PC-9 (cell line): ENCODE measurements at regions of chr9 and their contacts with region 1.

Region 1: GRCh38 chr9:94783102-94783664 is 56.7 kb downstream of the AOPEP start:
- DNase-seq: peak; percentile 98 to 99
- H3K4me3 ChIP-seq: no peak overlapping the region
- H3K27ac ChIP-seq: peak overlapping the region; percentile 78
- H3K4me1 ChIP-seq: peaks cover 30% of the 10 kb centered on the region
- H3K27me3 ChIP-seq: no peaks in the 10 kb centered on the region
- CTCF ChIP-seq: peak; percentile 84

Region 2: GRCh38 chr9:94586814-94587213 is 196.4 kb before region 1 on chr9:
- CTCF ChIA-PET with region 1: no interaction called
- POLR2A ChIA-PET with region 1: interaction called, 10 read pairs
- intact Hi-C with region 1: no loop called
- DNase-seq: peak in 1 of 2 experiments; percentile 8
- H3K4me3 ChIP-seq: no peak overlapping the region
- H3K27ac ChIP-seq: no peak overlapping the region
- H3K4me1 ChIP-seq: no peaks in the 10 kb centered on the region
- H3K27me3 ChIP-seq: no peaks in the 10 kb centered on the region
- CTCF ChIP-seq: no peak

Region 3: GRCh38 chr9:94757158-94757557 is 26.0 kb before region 1 on chr9:
- CTCF ChIA-PET with region 1: no interaction called
- POLR2A ChIA-PET with region 1: interaction called, 17 read pairs
- intact Hi-C with region 1: no loop called
- DNase-seq: no peak
- H3K4me3 ChIP-seq: no peak overlapping the region
- H3K27ac ChIP-seq: no peak overlapping the region
- H3K4me1 ChIP-seq: no peaks in the 10 kb centered on the region
- H3K27me3 ChIP-seq: no peaks in the 10 kb centered on the region
- CTCF ChIP-seq: no peak

Region 4: DNA sequence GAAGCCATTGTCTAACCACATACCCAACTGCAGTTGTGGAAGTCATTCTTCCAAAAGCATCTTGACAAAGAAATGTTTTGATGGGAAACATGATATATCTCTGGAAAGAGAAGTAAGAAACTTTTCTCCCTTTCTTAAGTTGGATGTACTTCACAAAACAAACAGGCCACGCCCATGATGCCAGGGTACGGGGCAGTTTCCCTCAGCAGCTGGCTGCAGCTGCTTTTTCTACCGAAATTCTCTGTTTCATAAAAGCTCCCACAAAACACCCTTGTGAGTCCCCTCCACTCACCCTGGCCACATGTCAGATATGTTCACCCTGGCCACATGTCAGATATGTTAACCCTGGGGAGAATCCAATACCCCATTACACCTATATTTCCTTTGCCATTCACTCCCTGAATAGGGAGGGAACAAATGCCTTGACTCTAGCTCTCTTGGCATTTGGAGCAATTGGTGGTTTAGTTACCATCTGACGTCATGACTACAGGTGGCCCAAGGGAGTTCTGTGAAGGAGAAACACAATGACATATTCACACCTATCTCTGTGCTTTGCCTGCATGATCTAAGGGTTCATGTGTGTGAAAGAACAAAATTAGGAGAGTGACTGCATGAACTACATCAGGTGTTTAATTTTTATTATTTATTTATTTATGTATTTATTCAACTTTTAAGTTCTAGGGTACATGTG is 46.3 kb after region 1 on chr9:
- CTCF ChIA-PET with region 1: no interaction called
- POLR2A ChIA-PET with region 1: no interaction called
- intact Hi-C with region 1: no loop called
- DNase-seq: no peak
- H3K4me3 ChIP-seq: no peak overlapping the region
- H3K27ac ChIP-seq: no peak overlapping the region
- H3K4me1 ChIP-seq: peaks cover 19% of the 10 kb centered on the region
- H3K27me3 ChIP-seq: no peaks in the 10 kb centered on the region
- CTCF ChIP-seq: no peak

Region 5: GRCh38 chr9:94922098-94922607 is 139.0 kb after region 1 on chr9:
- CTCF ChIA-PET with region 1: interaction called, 5 read pairs
- POLR2A ChIA-PET with region 1: interaction called, 4 read pairs
- intact Hi-C with region 1: loop called (anchors 1 kb)
- DNase-seq: peak; percentile 79 to 99
- H3K4me3 ChIP-seq: peak overlapping the region; percentile 46
- H3K27ac ChIP-seq: peak overlapping the region; percentile 97
- H3K4me1 ChIP-seq: peaks cover 92% of the 10 kb centered on the region
- H3K27me3 ChIP-seq: no peaks in the 10 kb centered on the region
- CTCF ChIP-seq: no peak

Region 6: DNA sequence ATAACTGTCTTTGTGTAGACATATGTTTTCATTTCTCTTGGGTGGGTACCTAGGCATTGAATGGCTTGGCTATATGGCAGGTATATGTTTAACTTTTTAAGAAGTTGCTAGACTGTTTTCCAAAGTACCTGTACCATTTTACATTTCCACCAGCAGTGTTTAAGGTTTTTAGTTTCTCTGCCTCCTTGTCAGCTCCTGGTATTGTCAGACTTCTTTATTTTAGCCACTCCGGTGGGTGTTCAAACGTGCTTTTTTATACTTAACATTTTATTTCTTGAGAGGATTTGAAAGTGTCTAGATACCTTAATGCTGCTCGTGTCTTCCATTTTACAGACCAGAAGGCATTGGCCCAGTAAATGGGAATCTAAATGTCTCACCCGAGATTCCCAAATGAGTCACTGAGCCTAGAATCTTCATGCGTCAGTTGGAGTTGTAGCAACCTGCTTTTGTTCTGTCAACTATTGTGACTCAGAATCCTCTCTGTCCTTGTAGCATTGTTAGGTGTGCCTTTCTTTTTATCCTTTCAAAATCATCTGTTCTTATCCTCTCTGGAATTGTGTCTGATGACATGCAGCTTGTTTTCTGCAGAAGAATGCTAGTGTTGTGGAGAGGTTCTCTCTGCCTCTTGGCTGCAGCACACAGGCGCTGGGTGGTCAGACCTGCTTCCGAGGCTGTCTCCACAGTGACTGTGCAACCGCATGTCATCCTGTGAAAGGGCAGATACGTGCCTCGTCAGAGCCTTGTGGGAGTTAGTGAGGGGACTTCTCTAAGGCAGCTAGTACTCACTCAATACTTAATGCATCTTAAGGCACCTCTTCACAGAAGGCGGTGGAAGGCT is 235.1 kb after region 1 on chr9:
- CTCF ChIA-PET with region 1: no interaction called
- POLR2A ChIA-PET with region 1: no interaction called
- intact Hi-C with region 1: loop called (anchors 1 kb)
- DNase-seq: peak in 1 of 2 experiments; percentile 77
- H3K4me3 ChIP-seq: no peak overlapping the region
- H3K27ac ChIP-seq: peak overlapping the region; percentile 38
- H3K4me1 ChIP-seq: peaks cover 12% of the 10 kb centered on the region; the same call in 1 of the 2 replicates
- H3K27me3 ChIP-seq: no peaks in the 10 kb centered on the region
- CTCF ChIP-seq: no peak

Region 7: DNA sequence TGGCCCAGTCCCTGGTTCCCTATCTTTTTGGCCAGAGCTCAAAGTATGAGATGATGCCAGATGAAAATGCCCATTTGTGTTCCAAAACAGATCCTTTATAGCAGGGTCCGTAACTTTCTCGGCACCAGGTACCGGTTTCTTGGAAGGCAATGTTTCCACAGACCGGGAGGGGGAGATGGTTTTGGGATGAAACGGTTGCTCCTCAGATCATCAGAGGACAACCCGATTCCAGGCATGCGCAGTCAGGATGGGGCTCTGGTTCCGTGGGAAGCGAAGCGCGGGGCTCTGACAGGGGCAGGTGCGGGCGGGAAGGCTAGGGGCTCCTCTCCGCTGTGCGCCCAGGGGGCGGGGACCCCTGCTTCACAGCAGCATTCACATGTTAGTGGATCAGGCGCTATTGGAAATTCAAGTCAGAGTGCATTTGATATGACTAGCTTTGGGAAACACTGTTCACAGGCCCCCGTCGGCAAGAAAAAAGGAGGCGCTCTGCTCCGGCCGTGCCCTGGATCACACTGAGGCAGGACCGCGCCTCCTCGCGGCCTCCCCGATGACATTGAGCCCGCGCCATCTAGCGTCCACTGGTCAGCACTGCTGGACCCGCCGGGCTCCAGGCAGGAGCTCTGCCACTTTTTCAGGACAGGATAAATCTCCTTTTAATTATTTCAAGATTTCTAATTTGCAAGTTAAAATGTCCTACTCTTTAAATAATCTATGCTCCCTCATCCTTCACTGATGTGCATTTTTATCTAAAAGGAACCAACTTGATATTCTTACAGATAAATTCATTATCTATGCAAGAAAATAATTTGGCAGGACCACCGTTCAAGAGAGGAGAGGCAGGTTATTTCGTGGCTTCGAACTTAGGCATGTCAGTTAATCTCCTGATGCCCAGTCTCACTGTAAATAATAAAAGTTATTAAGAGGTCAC is 344.3 kb after region 1 on chr9:
- CTCF ChIA-PET with region 1: interaction called, 4 read pairs
- POLR2A ChIA-PET with region 1: no interaction called
- intact Hi-C with region 1: loop called (anchors 1 kb)
- DNase-seq: peak; percentile 43 to 83
- H3K4me3 ChIP-seq: no peak overlapping the region
- H3K27ac ChIP-seq: no peak overlapping the region
- H3K4me1 ChIP-seq: no peaks in the 10 kb centered on the region
- H3K27me3 ChIP-seq: no peaks in the 10 kb centered on the region
- CTCF ChIP-seq: peak; percentile 89

Region 8: DNA sequence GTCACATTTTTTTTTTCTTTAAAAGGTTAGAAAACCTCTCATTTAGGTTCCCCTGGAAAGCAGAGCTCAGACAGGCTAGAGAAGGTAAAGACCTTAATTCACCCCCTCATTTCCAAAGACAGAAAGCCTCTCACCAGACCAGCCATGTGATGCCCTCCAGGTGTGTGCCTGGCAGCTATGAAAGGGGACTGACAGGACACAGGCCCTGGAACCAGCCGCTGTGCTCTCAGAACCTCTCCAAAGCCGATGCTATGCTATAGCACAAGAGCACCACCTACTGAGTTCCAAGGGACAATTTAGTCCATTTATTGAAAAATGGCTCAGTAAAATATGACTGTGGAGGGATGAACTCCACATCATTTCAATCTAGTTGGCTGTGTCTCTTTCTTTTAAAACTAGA is 485.5 kb after region 1 on chr9:
- CTCF ChIA-PET with region 1: no interaction called
- POLR2A ChIA-PET with region 1: no interaction called
- intact Hi-C with region 1: no loop called
- DNase-seq: no peak
- H3K4me3 ChIP-seq: no peak overlapping the region
- H3K27ac ChIP-seq: no peak overlapping the region
- H3K4me1 ChIP-seq: no peaks in the 10 kb centered on the region
- H3K27me3 ChIP-seq: no peaks in the 10 kb centered on the region
- CTCF ChIP-seq: no peak